ENCODE measurements at regions of chr1 and their contacts with region 1.

Region 1: DNA sequence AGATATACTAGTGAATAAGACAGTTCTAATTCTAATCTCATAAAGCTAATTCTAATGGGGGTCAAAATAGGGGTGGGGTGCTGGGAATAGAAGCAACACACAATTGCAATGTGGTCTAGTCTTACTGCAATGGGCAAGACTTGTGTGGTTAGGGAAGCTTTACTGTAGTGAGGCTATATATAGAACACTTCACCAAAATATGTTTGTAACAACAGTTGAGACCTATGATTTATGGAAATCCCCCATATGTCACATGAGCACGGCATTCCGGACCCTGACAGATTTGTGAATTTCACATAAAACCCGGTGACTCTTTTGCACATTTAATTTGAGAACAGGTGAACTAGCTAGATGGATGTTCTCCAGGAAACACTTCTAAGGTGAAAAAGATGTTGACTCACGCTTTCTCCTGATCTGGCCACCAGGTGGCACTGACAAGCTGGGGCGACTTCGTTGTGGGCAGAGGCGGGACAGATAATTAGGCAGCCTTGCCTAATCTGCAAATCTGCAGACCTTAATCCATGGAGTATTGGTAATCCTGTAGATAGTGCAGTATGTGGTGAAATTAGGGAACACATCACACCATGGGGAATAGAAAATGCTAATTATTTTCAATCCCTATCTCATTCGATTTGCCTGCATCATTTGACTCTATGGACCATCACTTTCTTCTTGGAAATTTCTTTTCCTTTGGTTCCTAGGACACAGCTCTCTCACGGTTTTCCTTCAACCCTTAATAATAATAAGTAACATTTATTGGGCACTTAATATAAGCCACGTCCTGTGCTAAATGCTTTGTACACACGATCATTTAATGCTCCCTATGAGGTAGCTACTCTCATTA is 37.7 kb downstream of the KIAA0040 start:
- DNase-seq: peak; percentile 32 to 77 (median 63)
- ATAC-seq: peak; percentile 78
- H3K4me3 ChIP-seq: no peak overlapping the region
- H3K4me3 Mint-ChIP-seq: peak overlapping the region in 1 of 10 donors; percentile 7
- H3K27ac ChIP-seq: no peak overlapping the region
- H3K27ac Mint-ChIP-seq: no peak overlapping the region
- H3K4me1 ChIP-seq: peaks cover 0 to 9% of the 10 kb centered on the region in 2 donors
- H3K4me1 Mint-ChIP-seq: peaks cover 8 to 34% (median 20%) of the 10 kb centered on the region in 7 donors
- H3K27me3 ChIP-seq: no peaks in the 10 kb centered on the region
- H3K27me3 Mint-ChIP-seq: peaks cover 26 to 40% (median 38%) of the 10 kb centered on the region in 5 donors

Region 2: GRCh38 chr1:174407665-174408064 is 747.2 kb before region 1 on chr1:
- CTCF ChIA-PET with region 1: no interaction called
- POLR2A ChIA-PET with region 1: no interaction called
- intact Hi-C with region 1: no loop called
- DNase-seq: no peak
- ATAC-seq: no peak
- H3K4me3 ChIP-seq: no peak overlapping the region
- H3K4me3 Mint-ChIP-seq: no peak overlapping the region
- H3K27ac ChIP-seq: no peak overlapping the region
- H3K27ac Mint-ChIP-seq: no peak overlapping the region
- H3K4me1 ChIP-seq: no peaks in the 10 kb centered on the region
- H3K4me1 Mint-ChIP-seq: peaks cover 0 to 27% (median 17%) of the 10 kb centered on the region in 7 donors
- H3K27me3 ChIP-seq: no peaks in the 10 kb centered on the region
- H3K27me3 Mint-ChIP-seq: no peaks in the 10 kb centered on the region

Region 3: GRCh38 chr1:175186433-175187142 is 31.7 kb after region 1 on chr1:
- CTCF ChIA-PET with region 1: interaction called, 12 read pairs
- POLR2A ChIA-PET with region 1: no interaction called
- intact Hi-C with region 1: loop called (anchors 1 to 2 kb)
- DNase-seq: no peak
- ATAC-seq: no peak
- H3K4me3 ChIP-seq: no peak overlapping the region
- H3K4me3 Mint-ChIP-seq: peak overlapping the region; percentile 12 to 96 (median 51)
- H3K27ac ChIP-seq: no peak overlapping the region
- H3K27ac Mint-ChIP-seq: peak overlapping the region; percentile 19 to 94 (median 73)
- H3K4me1 ChIP-seq: peaks cover 83 to 92% of the 10 kb centered on the region in 2 donors
- H3K4me1 Mint-ChIP-seq: peaks cover 77 to 100% (median 98%) of the 10 kb centered on the region in 7 donors
- H3K27me3 ChIP-seq: no peaks in the 10 kb centered on the region
- H3K27me3 Mint-ChIP-seq: no peaks in the 10 kb centered on the region

Region 4: DNA sequence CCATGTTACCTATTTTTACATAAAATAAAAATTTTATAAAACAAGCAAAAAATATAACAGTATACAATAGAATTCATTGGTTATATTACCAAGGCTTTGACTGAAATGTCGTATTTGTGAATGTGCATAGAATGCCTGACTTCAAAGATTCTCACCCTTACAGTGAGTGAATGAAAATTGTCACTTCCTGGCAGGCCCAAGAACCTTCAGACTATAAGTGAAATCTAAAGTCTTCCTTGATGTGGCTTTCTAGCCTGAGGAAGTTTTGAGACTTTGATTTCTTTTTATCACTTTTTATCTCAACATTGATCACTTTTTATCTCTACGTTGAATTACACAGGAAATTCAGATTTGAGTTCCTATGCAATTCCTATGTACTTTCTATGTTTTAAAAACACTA is 142.4 kb after region 1 on chr1:
- CTCF ChIA-PET with region 1: interaction called, 3 read pairs
- POLR2A ChIA-PET with region 1: no interaction called
- intact Hi-C with region 1: loop called in 1 of 2 experiments (anchors 1 kb)
- DNase-seq: peak in 7 of 9 donors; percentile 39 to 76 (median 68)
- ATAC-seq: peak; percentile 91
- H3K4me3 ChIP-seq: no peak overlapping the region
- H3K4me3 Mint-ChIP-seq: peak overlapping the region in 7 of 10 donors; percentile 32 to 67 (median 46)
- H3K27ac ChIP-seq: no peak overlapping the region
- H3K27ac Mint-ChIP-seq: no peak overlapping the region
- H3K4me1 ChIP-seq: peaks cover 5 to 29% of the 10 kb centered on the region in 2 donors
- H3K4me1 Mint-ChIP-seq: peaks cover 11 to 53% (median 42%) of the 10 kb centered on the region in 7 donors
- H3K27me3 ChIP-seq: no peaks in the 10 kb centered on the region
- H3K27me3 Mint-ChIP-seq: peaks cover 10 to 32% (median 14%) of the 10 kb centered on the region in 5 donors

Region 5: GRCh38 chr1:175338387-175339135 is 183.7 kb after region 1 on chr1:
- CTCF ChIA-PET with region 1: interaction called, 10 read pairs
- POLR2A ChIA-PET with region 1: no interaction called
- intact Hi-C with region 1: loop called (anchors 1 to 5 kb)
- DNase-seq: peak; percentile 15 to 59 (median 47)
- ATAC-seq: peak; percentile 92
- H3K4me3 ChIP-seq: no peak overlapping the region
- H3K4me3 Mint-ChIP-seq: no peak overlapping the region
- H3K27ac ChIP-seq: no peak overlapping the region
- H3K27ac Mint-ChIP-seq: no peak overlapping the region
- H3K4me1 ChIP-seq: no peaks in the 10 kb centered on the region
- H3K4me1 Mint-ChIP-seq: peaks cover 0 to 8% (median 2%) of the 10 kb centered on the region in 7 donors
- H3K27me3 ChIP-seq: no peaks in the 10 kb centered on the region
- H3K27me3 Mint-ChIP-seq: peaks cover 10 to 35% (median 13%) of the 10 kb centered on the region in 5 donors

Region 6: GRCh38 chr1:175481126-175482066 is 326.5 kb after region 1 on chr1:
- CTCF ChIA-PET with region 1: no interaction called
- POLR2A ChIA-PET with region 1: no interaction called
- intact Hi-C with region 1: loop called in 1 of 2 experiments (anchors 1 kb)
- DNase-seq: no peak
- ATAC-seq: no peak
- H3K4me3 ChIP-seq: no peak overlapping the region
- H3K4me3 Mint-ChIP-seq: no peak overlapping the region
- H3K27ac ChIP-seq: no peak overlapping the region
- H3K27ac Mint-ChIP-seq: no peak overlapping the region
- H3K4me1 ChIP-seq: no peaks in the 10 kb centered on the region
- H3K4me1 Mint-ChIP-seq: no peaks in the 10 kb centered on the region
- H3K27me3 ChIP-seq: no peaks in the 10 kb centered on the region
- H3K27me3 Mint-ChIP-seq: peaks cover 10 to 30% (median 22%) of the 10 kb centered on the region in 5 donors

Region 7: GRCh38 chr1:176073524-176074157 is 918.8 kb after region 1 on chr1:
- CTCF ChIA-PET with region 1: no interaction called
- POLR2A ChIA-PET with region 1: interaction called, 3 read pairs
- intact Hi-C with region 1: loop called (anchors 1 to 5 kb)
- DNase-seq: peak in 7 of 9 donors; percentile 1 to 31 (median 25)
- ATAC-seq: peak; percentile 63
- H3K4me3 ChIP-seq: no peak overlapping the region
- H3K4me3 Mint-ChIP-seq: no peak overlapping the region
- H3K27ac ChIP-seq: no peak overlapping the region
- H3K27ac Mint-ChIP-seq: no peak overlapping the region
- H3K4me1 ChIP-seq: no peaks in the 10 kb centered on the region
- H3K4me1 Mint-ChIP-seq: peaks cover 2 to 28% (median 12%) of the 10 kb centered on the region in 7 donors
- H3K27me3 ChIP-seq: no peaks in the 10 kb centered on the region
- H3K27me3 Mint-ChIP-seq: no peaks in the 10 kb centered on the region

Measured in naive thymus-derived CD4-positive, alpha-beta T cell (primary cell).